ENCODE measurements at regions of chr6 and their contacts with region 1.

Region 1: DNA sequence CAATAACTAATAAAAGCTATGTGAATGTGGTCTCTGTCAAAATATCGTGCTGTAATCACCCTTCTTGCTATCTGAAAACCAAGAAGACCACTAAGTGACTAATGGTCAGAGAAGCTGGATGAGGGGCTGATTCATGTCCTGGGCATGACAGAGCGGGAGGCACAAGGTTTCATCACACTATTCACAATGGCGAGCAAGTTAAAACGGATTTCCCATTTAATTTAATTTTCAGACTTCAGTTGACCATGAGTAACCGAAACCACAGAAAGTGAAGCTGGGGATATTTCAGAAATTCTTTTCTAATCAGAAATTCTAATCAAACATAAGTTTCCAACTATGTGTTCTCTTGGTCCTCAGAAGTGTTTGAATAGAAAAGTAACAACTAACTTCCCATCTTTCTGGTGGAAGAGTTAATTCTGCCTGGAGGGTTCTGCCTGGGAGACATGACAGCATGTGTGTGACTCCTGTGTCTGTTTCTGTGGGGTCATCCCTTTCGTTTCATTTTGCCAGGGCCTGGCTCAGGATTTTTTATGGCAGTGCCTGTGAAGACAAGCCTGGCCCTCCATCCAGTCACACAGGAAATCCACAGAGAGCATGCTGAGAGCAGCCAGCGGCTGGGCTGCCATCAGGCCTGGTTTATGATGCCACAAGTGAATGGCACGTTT is 98.9 kb downstream of the FAM120B start:
- DNase-seq: peak; percentile 98
- H3K4me3 ChIP-seq: no peak overlapping the region
- H3K27ac ChIP-seq: peak overlapping the region; percentile 98
- H3K4me1 ChIP-seq: peaks cover 39% of the 10 kb centered on the region
- H3K27me3 ChIP-seq: no peaks in the 10 kb centered on the region
- CTCF ChIP-seq: no peak

Region 2: DNA sequence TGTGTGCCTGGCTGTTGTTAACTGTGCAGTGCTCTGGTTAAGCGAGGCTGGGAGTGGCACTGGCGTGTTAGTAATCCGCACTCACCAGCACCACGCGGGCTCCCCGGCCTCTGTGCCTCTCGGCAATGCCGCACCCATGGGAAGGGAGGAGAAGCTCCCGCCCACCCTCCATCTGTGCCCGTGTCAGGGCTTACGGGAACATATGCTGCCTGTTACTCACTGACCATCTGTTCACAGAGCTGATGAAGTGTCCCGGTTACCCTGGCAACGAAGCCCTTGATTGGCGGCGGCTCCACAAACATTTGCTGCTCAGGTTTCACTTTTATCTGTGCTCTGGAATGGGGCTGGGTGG is 32.9 kb after region 1 on chr6:
- CTCF ChIA-PET with region 1: no interaction called
- dilution Hi-C with region 1: no loop called
- in situ Hi-C with region 1: no loop called
- intact Hi-C with region 1: loop called (anchors 1 kb)
- DNase-seq: peak; percentile 100
- H3K4me3 ChIP-seq: no peak overlapping the region
- H3K27ac ChIP-seq: peak overlapping the region; percentile 93
- H3K4me1 ChIP-seq: peaks cover 19% of the 10 kb centered on the region
- H3K27me3 ChIP-seq: no peaks in the 10 kb centered on the region
- CTCF ChIP-seq: no peak

Measured in mammary epithelial cell (primary cell).